ENCODE measurements at regions of chr12 and their contacts with region 1.

Region 1: DNA sequence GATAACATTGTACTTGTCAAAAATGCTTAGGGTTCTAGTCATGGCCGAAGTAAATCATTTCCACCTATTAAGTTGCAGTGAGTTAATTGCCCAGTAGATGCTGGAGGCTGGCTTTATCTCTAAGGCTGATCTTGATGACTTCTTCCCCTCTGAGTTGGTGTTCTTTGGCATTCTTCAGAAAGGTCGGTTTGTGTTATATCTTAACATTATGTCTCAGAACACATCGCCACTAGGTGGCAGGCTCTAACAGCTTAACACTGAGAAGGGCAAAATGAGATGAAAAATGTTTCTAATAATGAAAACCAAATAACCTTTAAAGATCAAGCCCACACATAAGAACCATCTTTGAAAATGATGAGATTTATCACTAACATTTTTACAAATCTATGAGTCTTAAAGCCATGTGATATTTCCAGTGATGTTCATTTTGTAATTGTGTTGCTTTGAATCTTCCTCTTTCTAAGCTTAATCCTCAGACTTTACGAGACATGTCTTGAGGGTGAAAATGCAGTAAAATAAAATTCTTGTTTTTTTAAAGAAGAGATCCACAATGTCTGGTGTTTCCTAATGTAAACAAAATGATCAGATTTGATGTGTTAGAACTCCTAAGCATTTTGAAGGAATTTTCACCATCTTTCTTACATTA is 28.6 kb downstream of the SUDS3 start:
- DNase-seq: peak in 1 of 2 donors; percentile 70
- H3K4me3 ChIP-seq: no peak overlapping the region
- H3K27ac ChIP-seq: no peak overlapping the region
- H3K4me1 ChIP-seq: no peaks in the 10 kb centered on the region
- H3K27me3 ChIP-seq: no peaks in the 10 kb centered on the region
- CTCF ChIP-seq: peak; percentile 45 to 71 (median 63)

Region 2: GRCh38 chr12:118467641-118468305 is 62.8 kb after region 1 on chr12:
- intact Hi-C with region 1: no loop called
- DNase-seq: no peak
- H3K4me3 ChIP-seq: no peak overlapping the region
- H3K27ac ChIP-seq: no peak overlapping the region
- H3K4me1 ChIP-seq: no peaks in the 10 kb centered on the region
- H3K27me3 ChIP-seq: no peaks in the 10 kb centered on the region
- CTCF ChIP-seq: no peak

Region 3: GRCh38 chr12:118611295-118611694 is 206.3 kb after region 1 on chr12:
- intact Hi-C with region 1: loop called (anchors 5 kb)
- DNase-seq: peak in 1 of 2 donors; percentile 70
- H3K4me3 ChIP-seq: no peak overlapping the region
- H3K27ac ChIP-seq: peak overlapping the region in 1 of 2 donors; percentile 18
- H3K4me1 ChIP-seq: no peaks in the 10 kb centered on the region
- H3K27me3 ChIP-seq: no peaks in the 10 kb centered on the region
- CTCF ChIP-seq: no peak

Region 4: DNA sequence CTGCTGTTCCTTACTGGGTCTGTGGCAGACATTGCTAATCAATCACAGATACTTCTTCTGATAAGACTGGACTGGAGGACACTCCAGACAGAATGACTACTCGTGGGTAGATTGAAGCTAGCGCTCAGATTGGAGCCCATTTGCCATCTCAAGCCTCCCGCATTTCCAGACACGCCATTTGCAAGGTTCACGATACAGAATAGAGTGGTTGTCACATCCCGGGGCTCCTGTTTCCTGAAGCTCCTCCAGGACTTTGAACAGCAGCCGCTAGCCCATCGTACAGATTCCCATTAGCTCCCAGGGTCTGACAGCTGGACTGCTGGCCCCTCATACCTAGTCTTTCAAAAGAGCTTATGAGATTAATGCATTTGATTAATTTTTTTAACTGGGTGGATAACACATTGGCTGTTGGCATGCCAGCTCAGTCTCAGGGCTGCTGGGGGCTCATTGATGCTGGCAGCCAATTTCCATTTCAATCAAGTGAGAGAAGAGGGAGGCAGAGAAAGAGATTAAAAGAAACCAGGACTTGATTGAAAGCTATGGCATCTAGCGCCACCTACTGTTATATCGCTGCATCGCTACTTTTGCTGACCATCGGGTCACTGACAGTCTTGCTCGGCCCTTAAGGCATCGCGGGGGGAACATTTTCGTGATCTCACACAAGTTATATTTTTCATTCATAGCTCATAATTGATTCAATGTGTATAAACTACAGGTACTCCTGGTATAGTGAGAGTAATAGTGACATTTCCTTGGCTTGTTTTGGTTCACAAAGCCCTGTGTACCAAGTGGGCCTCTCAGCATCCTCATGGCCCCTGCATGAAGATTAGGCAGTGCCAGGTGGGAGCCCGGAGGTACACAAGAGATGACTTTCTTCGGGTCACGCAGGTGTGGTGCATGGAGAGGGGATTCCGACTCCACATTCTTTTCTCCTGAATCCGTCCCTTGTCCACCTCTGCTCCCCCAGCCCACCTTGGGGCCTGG is 1008.1 kb after region 1 on chr12:
- intact Hi-C with region 1: loop called (anchors 10 kb)
- DNase-seq: peak in 1 of 2 donors; percentile 75
- H3K4me3 ChIP-seq: no peak overlapping the region
- H3K27ac ChIP-seq: no peak overlapping the region
- H3K4me1 ChIP-seq: peaks cover 0 to 3% of the 10 kb centered on the region in 2 donors
- H3K27me3 ChIP-seq: no peaks in the 10 kb centered on the region
- CTCF ChIP-seq: peak; percentile 64 to 85 (median 83)

Region 5: GRCh38 chr12:119544765-119545625 is 1140.0 kb after region 1 on chr12:
- intact Hi-C with region 1: loop called (anchors 10 kb)
- DNase-seq: peak in 1 of 2 donors; percentile 65
- H3K4me3 ChIP-seq: no peak overlapping the region
- H3K27ac ChIP-seq: no peak overlapping the region
- H3K4me1 ChIP-seq: no peaks in the 10 kb centered on the region
- H3K27me3 ChIP-seq: no peaks in the 10 kb centered on the region
- CTCF ChIP-seq: peak; percentile 31 to 71 (median 61)